ENCODE measurements at regions of chr1 and their contacts with region 1.

Region 1: DNA sequence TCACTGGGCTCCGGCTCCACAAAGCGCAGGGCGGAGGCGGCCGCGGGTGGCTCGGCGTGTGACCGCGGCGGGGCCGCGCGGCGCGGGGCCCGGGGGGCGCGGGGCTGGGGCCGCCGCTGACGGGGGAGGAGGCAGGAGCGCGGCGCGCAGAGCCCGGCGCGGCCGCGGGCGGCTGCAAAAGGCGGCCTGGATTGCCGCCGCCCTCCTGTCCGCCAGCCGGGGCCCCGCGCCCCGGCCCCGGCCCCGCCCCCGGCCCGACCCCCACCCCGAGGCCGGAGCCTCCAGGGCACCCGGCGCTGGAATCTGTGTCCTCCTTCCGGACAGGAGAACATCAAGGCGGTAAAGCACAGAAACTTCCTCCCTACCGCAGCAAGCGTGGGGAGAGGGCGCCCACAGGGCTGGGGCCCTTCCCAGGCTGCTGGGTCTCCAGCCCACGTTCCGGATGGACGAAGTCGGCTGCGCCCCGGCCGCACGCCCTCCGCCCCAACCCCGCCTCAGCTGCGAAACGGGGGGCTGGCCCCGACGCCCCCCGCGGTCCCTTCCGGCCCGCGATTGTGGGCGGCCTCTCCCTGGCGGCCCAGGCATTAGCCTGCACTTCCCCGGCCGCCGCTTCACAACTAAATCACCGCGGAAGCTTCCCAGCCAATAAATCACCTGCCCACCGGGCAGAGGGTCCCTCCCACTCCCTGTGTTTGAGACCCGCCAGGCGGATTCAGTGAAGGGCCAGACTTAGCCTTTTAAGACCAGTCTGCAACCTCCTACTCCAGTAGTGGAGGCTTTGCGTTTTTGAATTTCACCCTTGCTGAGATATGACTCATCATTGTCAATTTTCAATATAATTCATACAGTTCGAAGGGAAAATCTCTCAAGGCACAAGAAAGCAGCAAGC is 106.0 kb downstream of the SLC45A1 start:
- DNase-seq: peak; percentile 65
- ATAC-seq: peak; percentile 66
- H3K4me3 ChIP-seq: peak overlapping the region; percentile 73
- H3K27ac ChIP-seq: peak overlapping the region; percentile 99
- H3K4me1 ChIP-seq: peaks cover 15% of the 10 kb centered on the region
- H3K27me3 ChIP-seq: no peaks in the 10 kb centered on the region
- CTCF ChIP-seq: no peak
- POLR2A ChIP-seq: peak; percentile 56; the same call in 1 of the 2 replicates
- RAD21 ChIP-seq: no peak; the same call in 1 of the 2 replicates

Region 2: DNA sequence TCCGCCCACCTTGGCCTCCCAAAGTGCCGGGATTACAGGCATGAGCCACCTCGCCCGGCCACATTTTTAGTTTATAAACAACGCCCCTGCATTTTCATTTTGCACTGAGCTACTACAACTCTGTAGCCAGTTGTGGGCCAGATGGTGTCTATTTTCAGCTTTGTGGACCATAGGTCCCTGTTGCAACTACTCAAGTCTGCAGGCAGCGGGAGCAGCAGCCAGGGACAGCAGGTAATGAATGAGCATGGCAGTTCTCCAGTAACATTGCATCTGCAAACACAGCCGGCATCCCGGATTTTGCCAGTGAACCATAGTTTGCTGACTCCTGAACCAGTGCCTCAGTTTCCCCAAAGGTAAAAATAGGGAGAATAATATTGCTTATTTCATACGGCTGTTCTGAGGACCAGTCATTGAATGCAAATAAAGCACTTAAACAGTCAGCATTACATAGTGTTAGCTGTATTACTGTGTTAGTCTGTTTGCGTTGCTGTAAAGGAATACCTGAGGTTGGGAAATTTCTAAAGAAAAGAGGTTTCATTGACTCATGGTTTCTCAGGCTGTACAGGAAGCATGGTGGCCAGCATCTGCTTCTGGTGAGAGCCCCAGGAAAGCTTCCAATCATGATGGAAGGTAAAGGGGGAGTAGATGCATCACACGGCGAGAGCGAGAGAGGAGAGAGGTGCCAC is 171.5 kb before region 1 on chr1:
- CTCF ChIA-PET with region 1: no interaction called
- POLR2A ChIA-PET with region 1: no interaction called
- dilution Hi-C with region 1: no loop called
- in situ Hi-C with region 1: no loop called
- intact Hi-C with region 1: no loop called
- DNase-seq: no peak
- ATAC-seq: no peak
- H3K4me3 ChIP-seq: no peak overlapping the region
- H3K27ac ChIP-seq: no peak overlapping the region
- H3K4me1 ChIP-seq: no peaks in the 10 kb centered on the region
- H3K27me3 ChIP-seq: no peaks in the 10 kb centered on the region
- CTCF ChIP-seq: no peak
- POLR2A ChIP-seq: no peak
- RAD21 ChIP-seq: no peak

Region 3: GRCh38 chr1:8374812-8375211 is 49.1 kb before region 1 on chr1:
- CTCF ChIA-PET with region 1: no interaction called
- POLR2A ChIA-PET with region 1: no interaction called
- dilution Hi-C with region 1: no loop called
- in situ Hi-C with region 1: no loop called
- intact Hi-C with region 1: loop called (anchors 2 kb)
- DNase-seq: peak; percentile 56
- ATAC-seq: no peak
- H3K4me3 ChIP-seq: no peak overlapping the region
- H3K27ac ChIP-seq: peak overlapping the region; percentile 79
- H3K4me1 ChIP-seq: peaks cover 63% of the 10 kb centered on the region
- H3K27me3 ChIP-seq: no peaks in the 10 kb centered on the region
- CTCF ChIP-seq: peak; percentile 47
- POLR2A ChIP-seq: no peak
- RAD21 ChIP-seq: peak; percentile 40

Region 4: GRCh38 chr1:8396786-8397406 is 27.0 kb before region 1 on chr1:
- CTCF ChIA-PET with region 1: no interaction called
- POLR2A ChIA-PET with region 1: no interaction called
- dilution Hi-C with region 1: no loop called
- in situ Hi-C with region 1: no loop called
- intact Hi-C with region 1: loop called (anchors 1 kb)
- DNase-seq: peak; percentile 99
- ATAC-seq: peak; percentile 79
- H3K4me3 ChIP-seq: no peak overlapping the region; the same call in 1 of the 2 replicates
- H3K27ac ChIP-seq: peak overlapping the region; percentile 53; the same call in 1 of the 2 replicates
- H3K4me1 ChIP-seq: peaks cover 29% of the 10 kb centered on the region
- H3K27me3 ChIP-seq: no peaks in the 10 kb centered on the region
- CTCF ChIP-seq: no peak
- POLR2A ChIP-seq: peak; percentile 75; the same call in 1 of the 2 replicates
- RAD21 ChIP-seq: no peak; the same call in none of the 2 replicates

Region 5: DNA sequence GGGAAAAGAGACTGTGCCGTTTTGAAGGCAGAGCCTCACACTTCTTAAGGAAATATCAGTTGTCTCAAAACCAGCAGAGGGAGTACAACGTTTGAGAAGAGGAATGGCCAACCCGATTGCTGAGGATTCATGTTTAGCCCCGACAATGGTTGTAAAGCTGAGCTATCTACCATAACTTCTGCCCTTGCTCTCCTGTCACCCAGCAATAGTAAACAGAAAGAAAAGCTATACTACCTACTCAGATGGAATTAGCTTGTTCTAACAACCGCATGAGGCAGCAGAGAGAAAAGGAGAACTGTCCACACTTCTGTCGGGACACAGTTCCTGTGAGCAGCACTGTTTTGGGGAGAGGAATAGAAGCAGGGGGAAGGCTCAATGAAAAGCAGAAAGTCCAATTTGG is 14.8 kb before region 1 on chr1:
- CTCF ChIA-PET with region 1: interaction called, 17 read pairs
- POLR2A ChIA-PET with region 1: no interaction called
- dilution Hi-C with region 1: no loop called
- in situ Hi-C with region 1: no loop called
- intact Hi-C with region 1: no loop called
- DNase-seq: peak; percentile 81
- ATAC-seq: peak; percentile 38
- H3K4me3 ChIP-seq: no peak overlapping the region
- H3K27ac ChIP-seq: peak overlapping the region; percentile 87
- H3K4me1 ChIP-seq: peaks cover 50% of the 10 kb centered on the region
- H3K27me3 ChIP-seq: no peaks in the 10 kb centered on the region
- CTCF ChIP-seq: peak; percentile 43
- POLR2A ChIP-seq: no peak
- RAD21 ChIP-seq: peak; percentile 44; the same call in 1 of the 2 replicates

Region 6: DNA sequence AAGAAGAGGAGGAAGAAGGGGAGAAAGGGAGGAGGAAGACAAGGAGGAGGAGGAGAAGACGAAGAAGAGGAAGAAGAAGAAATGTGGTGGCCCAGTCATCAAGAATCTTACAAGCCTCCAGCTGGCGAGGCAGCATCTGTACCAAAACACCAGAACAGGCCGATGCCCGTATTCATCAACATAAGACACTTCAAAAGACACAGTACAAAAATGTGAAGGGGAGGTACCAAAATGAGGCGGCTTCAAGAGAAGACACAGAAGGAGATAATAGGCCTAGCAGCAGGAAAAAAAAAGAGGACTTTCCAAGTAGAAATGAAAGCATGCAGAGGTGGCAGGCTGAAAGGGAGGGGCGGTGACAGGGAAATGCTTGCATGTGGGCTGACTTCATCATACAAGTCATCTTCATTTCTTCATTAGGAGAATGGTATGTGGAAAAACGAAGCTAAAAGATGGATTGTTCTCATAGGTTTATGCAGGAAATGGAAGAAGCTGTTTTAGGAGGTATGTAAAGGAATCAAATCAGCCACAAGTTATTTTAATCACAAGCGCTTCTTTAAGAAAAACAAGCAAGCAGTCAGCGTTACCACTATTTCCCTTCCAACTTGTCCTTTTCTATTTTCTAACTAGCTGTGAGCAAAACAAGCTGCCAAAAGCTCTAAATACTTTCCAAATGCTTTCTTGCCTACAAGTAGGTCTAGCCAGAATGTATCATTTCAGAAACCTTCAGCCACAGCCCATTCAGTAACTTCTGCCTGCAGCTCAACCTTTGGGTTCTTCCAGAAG is 86.3 kb after region 1 on chr1:
- CTCF ChIA-PET with region 1: no interaction called
- POLR2A ChIA-PET with region 1: no interaction called
- dilution Hi-C with region 1: no loop called
- in situ Hi-C with region 1: no loop called
- intact Hi-C with region 1: loop called (anchors 5 kb)
- DNase-seq: peak; percentile 88
- ATAC-seq: peak; percentile 82
- H3K4me3 ChIP-seq: peak overlapping the region; percentile 25
- H3K27ac ChIP-seq: peak overlapping the region; percentile 86
- H3K4me1 ChIP-seq: peaks cover 18% of the 10 kb centered on the region
- H3K27me3 ChIP-seq: no peaks in the 10 kb centered on the region
- CTCF ChIP-seq: no peak
- POLR2A ChIP-seq: no peak
- RAD21 ChIP-seq: no peak

Region 7: DNA sequence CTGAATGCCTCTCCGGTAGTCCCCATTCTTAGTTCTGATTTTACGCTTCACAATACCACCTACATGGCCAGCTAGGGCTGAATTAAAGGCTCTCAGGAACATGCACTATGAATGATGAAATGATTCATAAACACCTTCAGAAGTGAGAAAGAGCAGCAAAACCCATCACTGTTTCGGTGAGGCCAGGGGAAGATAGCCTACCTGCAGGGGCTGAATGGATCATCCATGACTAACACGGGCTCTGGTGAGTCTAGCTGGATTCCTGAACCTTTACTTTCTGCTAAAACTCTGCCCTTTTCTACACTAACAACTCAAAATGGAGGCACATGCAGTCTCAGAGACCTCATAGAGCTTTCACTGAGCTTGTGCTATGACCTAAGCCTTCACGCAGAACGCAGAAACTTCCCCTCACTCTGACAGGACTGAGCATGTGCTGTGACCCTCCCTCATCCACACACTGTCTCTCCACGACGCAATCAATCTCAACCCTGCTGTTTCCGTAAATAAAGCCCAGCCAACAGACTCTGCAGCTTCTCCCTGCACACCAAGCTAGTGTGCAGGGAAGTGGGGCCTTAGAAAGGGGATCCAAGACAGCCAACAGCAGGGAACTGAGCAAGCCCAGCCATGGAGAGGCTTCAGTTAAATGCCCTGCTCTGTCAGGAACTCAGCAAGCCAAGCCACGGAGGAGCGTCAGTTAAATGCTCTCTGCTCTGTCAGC is 101.8 kb after region 1 on chr1:
- CTCF ChIA-PET with region 1: no interaction called
- POLR2A ChIA-PET with region 1: no interaction called
- dilution Hi-C with region 1: no loop called
- in situ Hi-C with region 1: no loop called
- intact Hi-C with region 1: loop called (anchors 5 kb)
- DNase-seq: peak; percentile 96
- ATAC-seq: peak; percentile 91
- H3K4me3 ChIP-seq: peak overlapping the region; percentile 32
- H3K27ac ChIP-seq: peak overlapping the region; percentile 59
- H3K4me1 ChIP-seq: peaks cover 11% of the 10 kb centered on the region
- H3K27me3 ChIP-seq: no peaks in the 10 kb centered on the region
- CTCF ChIP-seq: no peak
- POLR2A ChIP-seq: peak; percentile 22; the same call in 1 of the 2 replicates
- RAD21 ChIP-seq: peak; percentile 27; the same call in 1 of the 2 replicates

Region 8: GRCh38 chr1:8702850-8703810 is 279.2 kb after region 1 on chr1:
- CTCF ChIA-PET with region 1: no interaction called
- POLR2A ChIA-PET with region 1: no interaction called
- dilution Hi-C with region 1: no loop called
- in situ Hi-C with region 1: no loop called
- intact Hi-C with region 1: loop called (anchors 5 kb)
- DNase-seq: peak; percentile 89
- ATAC-seq: peak; percentile 84
- H3K4me3 ChIP-seq: peak overlapping the region; percentile 93
- H3K27ac ChIP-seq: peak overlapping the region; percentile 94
- H3K4me1 ChIP-seq: peaks cover 10% of the 10 kb centered on the region
- H3K27me3 ChIP-seq: no peaks in the 10 kb centered on the region
- CTCF ChIP-seq: peak; percentile 35
- POLR2A ChIP-seq: peak; percentile 91
- RAD21 ChIP-seq: peak; percentile 39